HEK293T (cell line): ENCODE measurements at regions of chr1 and their contacts with region 1.

Region 1: GRCh38 chr1:28736450-28737306 is at the start of gene YTHDF2:
- DNase-seq: peak; percentile 97

Region 2: GRCh38 chr1:28642847-28643635 is 93.6 kb before region 1 on chr1 and contains the start of gene TAF12:
- CTCF ChIA-PET with region 1: no interaction called
- POLR2A ChIA-PET with region 1: interaction called, 45 read pairs
- DNase-seq: peak; percentile 98

Region 3: GRCh38 chr1:28668191-28668955 is 68.3 kb before region 1 on chr1 and contains the start of gene GMEB1:
- CTCF ChIA-PET with region 1: interaction called, 10 read pairs
- POLR2A ChIA-PET with region 1: interaction called, 44 read pairs
- DNase-seq: peak; percentile 100

Region 4: GRCh38 chr1:28719332-28719619 is 17.4 kb before region 1 on chr1:
- CTCF ChIA-PET with region 1: interaction called, 14 read pairs
- POLR2A ChIA-PET with region 1: interaction called, 5 read pairs
- DNase-seq: no peak

Region 5: DNA sequence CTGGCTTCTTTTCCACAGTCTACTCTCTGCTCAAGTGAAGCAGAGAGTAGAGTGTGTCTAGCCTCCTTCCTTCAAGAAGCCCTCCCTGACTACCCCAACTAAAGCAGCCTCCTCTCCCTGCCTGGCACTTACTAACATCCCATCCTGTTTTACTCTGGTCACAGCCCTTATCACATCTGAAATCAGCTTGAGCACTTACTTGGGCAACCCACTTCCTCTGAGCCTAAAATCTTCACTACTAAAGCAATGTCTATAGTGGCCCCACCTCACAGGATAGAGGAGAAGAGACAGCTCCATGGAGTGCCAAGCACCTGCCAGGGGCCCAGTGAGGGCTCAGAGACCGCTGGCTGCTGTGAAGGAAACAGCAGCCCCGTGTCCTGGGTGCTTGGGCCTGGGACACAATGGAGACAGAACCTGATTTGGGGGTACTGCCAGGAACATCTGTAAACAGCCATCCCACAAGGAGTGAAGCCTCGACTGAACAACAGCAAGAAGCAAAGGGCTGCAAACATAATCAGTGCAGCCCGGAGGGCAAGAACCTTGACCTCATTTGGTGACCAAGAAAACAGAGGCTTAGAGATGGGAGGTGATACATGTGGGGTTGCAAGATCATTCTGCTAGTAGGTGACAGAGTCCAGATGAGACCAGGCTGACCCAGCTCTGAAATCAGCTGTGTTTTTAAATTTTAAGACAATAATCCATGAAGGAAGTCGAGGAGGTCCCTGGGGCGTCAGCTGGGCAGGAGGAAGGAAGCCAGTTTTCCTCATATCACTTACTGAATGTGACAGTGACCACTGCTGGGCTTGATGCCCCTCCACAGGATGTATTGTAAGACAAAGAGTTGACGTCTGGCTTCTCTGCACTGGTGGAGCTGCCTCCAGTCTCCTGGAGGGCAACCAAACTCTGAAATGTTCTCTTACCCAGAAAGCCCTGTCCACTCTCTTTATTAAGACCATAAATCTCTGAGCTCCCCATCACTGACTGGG is 1276.1 kb after region 1 on chr1:
- CTCF ChIA-PET with region 1: no interaction called
- POLR2A ChIA-PET with region 1: no interaction called
- DNase-seq: no peak